ENCODE measurements at regions of chr14 and their contacts with region 1.

Region 1: DNA sequence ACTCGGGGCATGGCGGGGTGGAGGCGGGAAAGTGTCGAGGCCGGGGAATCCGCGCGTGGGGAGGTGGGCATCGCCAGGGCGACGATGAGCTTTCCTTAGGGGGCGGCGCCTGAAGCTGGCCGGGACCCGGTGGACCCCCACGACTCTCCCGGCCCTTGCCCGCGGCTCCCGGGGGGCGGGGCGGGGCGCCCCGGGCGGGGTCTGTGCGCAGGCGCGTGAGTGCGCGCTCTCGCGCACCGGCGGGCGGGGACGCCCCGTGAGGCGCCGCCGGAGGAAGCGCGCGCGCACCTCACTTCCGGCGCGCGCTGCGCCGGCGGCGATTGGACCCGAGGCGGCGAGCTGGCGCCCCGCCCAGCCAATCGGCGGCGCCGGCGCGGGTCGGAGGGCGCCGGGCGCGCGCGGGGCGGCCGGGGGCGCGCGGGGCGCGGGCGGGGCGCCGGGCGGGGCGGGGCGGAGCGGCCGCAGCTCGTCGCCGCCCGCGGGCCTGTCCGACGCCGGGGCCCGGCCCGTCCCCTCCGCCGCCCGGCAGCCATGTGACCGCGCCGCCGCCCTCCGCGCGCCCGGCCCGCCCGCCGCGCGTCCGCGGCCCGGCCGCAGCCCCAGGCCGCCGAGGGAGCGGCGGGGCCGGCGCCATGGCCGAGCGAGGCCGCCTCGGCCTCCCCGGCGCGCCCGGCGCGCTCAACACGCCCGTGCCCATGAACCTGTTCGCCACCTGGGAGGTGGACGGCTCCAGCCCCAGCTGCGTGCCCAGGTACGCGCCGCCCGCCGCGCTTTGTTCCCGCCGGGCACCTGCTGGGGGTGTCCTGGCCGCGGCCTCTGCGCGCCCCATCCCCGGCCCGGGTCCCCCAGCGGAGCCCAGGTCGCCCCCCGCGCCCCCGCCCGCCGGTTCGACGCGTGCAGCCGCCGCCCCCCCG is at the start of gene PACS2:
- DNase-seq: peak; percentile 88
- H3K4me3 ChIP-seq: peak within 1 kb of the TSS; percentile 63 to 95 (median 88)
- H3K27ac ChIP-seq: peak within 1 kb of the TSS; percentile 91 to 98 (median 94)
- H3K4me1 ChIP-seq: peaks cover 0 to 45% (median 40%) of the 10 kb centered on the region in 4 donors
- H3K27me3 ChIP-seq: no peaks in the 10 kb centered on the region
- CTCF ChIP-seq: no peak
- EP300 ChIP-seq: no peak
- POLR2A ChIP-seq: no peak
- total RNA-seq, gene PACS2: 38.7 to 90.6 (median 47.4) TPM

Region 2: DNA sequence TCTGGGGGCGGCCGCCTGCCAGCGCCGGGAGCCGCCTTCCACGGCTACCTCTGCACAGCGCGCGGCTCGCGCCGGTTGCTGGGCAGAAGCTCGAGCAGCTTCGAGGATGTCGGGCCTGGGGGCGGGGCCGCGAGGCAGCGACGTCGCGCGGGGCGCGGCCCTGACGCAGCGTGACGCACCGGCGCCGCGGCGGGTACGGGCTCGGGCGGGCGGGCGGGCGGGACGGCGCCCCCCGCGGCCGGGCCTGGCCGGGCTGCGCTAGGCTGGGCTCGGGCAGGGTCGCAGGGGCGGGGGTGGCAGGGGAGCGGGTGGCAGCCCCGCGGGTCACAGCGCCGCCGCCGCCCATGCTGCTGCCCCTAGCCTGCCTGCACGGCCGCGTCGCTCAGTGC is 66.2 kb before region 1 on chr14 and contains the start of gene BTBD6:
- intact Hi-C with region 1: loop called (anchors 10 kb)
- DNase-seq: peak; percentile 93
- H3K4me3 ChIP-seq: peak within 1 kb of the TSS; percentile 43 to 70 (median 63)
- H3K27ac ChIP-seq: peak within 1 kb of the TSS; percentile 84 to 96 (median 92)
- H3K4me1 ChIP-seq: peaks cover 0 to 27% (median 20%) of the 10 kb centered on the region in 4 donors
- H3K27me3 ChIP-seq: no peaks in the 10 kb centered on the region
- CTCF ChIP-seq: no peak
- EP300 ChIP-seq: no peak
- POLR2A ChIP-seq: peak in 1 of 2 donors; percentile 28
- total RNA-seq, gene BTBD6: 31.3 to 46.7 (median 37.1) TPM

Region 3: GRCh38 chr14:105258846-105259245 is 55.7 kb before region 1 on chr14:
- intact Hi-C with region 1: no loop called
- DNase-seq: no peak
- H3K4me3 ChIP-seq: no peak overlapping the region
- H3K27ac ChIP-seq: no peak overlapping the region
- H3K4me1 ChIP-seq: no peaks in the 10 kb centered on the region
- H3K27me3 ChIP-seq: no peaks in the 10 kb centered on the region
- CTCF ChIP-seq: no peak
- EP300 ChIP-seq: no peak
- POLR2A ChIP-seq: no peak

Region 4: DNA sequence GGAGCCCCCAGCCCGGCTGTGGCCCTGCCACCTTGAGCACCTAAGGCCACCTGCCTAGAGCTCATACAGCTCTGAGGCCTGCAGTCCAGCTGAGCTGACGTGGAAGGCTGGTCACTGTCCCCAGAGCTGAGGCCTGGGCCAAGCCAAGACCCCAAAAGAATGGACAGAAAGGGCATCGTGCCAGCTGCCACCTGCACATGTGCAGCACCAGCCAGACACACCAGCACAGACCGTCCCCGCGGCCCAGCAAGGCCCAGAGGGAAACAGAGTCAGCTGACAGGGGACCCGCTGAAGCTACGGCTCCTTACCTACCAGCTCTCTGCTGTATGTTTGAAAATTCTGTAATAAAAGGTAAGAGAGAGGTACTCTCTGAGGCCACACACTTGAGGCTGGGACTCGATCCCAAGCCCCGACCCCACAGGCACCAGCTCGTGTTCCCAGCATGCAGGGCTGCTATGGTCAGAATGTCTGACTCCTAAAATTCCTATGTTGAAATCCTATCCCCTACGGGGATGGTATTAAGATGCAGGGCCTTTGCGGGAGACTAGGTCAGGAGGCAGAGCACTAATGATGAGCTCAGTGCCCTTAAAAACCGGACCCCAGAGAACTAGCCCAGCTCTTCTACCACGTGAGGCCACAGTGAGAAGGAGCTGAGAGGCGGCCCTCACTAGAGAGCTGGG is 39.1 kb before region 1 on chr14:
- intact Hi-C with region 1: no loop called
- DNase-seq: no peak
- H3K4me3 ChIP-seq: no peak overlapping the region
- H3K27ac ChIP-seq: no peak overlapping the region
- H3K4me1 ChIP-seq: no peaks in the 10 kb centered on the region
- H3K27me3 ChIP-seq: no peaks in the 10 kb centered on the region
- CTCF ChIP-seq: no peak
- EP300 ChIP-seq: no peak
- POLR2A ChIP-seq: no peak

Region 5: DNA sequence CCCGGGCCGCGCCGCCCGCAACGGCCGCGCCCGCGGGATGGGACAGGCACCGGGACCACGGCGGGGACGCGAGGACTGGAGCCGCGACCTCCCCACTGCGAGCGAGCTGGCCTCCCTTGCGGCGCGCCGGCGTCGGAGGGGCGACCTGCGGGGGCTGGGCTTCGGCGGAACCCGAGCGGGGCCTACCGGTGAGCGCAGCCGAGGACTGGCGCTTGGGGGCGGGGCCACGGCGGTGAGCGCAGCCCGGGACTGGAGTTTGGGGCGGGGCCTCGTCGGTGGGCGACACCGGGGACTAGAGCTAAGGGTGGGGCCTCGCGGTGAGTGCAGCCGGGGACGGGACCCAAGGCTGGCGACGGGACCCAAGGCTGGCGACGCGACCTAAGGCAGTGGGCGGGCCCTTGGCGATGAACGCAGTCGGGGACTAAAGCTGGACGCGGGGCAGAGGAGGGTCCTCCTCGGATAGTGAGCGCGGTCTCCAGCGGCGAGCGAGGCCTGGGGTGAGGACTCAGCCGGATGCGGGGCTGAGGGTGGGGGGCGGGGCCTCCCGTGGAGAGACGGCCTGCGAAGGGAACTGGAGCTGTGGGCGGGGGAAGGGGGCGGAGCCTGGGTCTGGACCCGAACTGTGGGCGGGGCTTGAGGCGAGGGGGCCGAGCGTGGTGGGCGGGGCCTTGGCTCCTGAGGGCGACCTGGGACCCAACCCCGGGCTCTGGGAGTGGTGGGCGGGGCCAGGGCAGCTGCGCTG is 13.6 kb before region 1 on chr14 and contains the start of gene BRF1:
- intact Hi-C with region 1: loop called (anchors 1 kb)
- DNase-seq: peak; percentile 99
- H3K4me3 ChIP-seq: peak within 1 kb of the TSS; percentile 64 to 88 (median 70)
- H3K27ac ChIP-seq: peak within 1 kb of the TSS; percentile 95 to 98 (median 98)
- H3K4me1 ChIP-seq: peaks cover 0 to 27% (median 21%) of the 10 kb centered on the region in 4 donors
- H3K27me3 ChIP-seq: no peaks in the 10 kb centered on the region
- CTCF ChIP-seq: no peak
- EP300 ChIP-seq: no peak
- POLR2A ChIP-seq: peak; percentile 15 to 40
- total RNA-seq, gene BRF1: 19.3 to 39.2 (median 28.5) TPM

Region 6: DNA sequence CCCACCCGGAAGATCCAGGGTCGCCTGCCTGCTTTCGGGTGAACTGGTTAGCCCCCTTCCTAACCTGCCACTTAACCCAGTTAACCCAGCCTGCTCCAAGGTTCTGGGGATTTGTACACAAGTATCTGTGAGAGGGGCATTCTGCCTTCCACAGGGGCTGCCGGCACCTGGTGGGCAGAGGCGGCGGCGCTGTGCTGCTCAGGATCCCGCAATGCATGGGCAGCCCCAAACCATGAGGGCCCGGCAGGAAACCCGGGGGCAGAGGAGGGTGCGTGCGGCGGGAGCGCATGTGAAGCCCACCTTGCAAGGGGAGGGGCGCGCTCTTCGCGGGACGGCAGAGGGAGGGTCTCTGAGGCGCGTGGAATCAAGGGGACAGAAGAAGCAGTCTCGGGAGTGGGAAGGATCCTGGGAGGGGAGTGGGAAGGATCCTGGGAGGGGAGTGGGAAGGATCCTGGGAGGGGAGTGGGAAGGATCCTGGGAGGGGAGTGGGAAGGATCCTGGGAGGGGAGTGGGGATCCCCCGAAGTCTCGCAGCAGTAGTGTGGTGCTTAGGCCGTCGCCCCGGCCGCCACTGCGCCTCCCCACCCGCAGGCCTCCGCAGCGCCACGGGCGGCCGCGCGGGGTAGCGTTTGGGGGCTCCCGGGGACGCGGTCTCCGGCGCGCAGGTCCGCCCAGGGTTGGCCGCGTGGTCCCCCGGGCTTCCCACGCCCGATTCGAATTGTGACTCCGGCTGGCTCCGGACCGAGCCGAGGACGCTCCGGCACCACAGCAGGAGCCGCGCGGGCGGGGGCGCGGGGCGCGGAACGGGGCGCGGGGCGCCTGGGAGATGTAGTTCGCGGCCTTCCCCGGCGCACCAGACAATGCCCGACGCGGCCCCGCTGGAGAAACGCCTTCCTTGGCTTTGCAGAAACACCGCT is 100.2 kb after region 1 on chr14:
- intact Hi-C with region 1: loop called (anchors 5 kb)
- DNase-seq: peak; percentile 90
- H3K4me3 ChIP-seq: peak overlapping the region; percentile 20 to 59 (median 56)
- H3K27ac ChIP-seq: peak overlapping the region; percentile 77 to 82 (median 80)
- H3K4me1 ChIP-seq: peaks cover 0 to 47% (median 37%) of the 10 kb centered on the region in 4 donors
- H3K27me3 ChIP-seq: peaks cover 10 to 34% (median 24%) of the 10 kb centered on the region in 3 donors
- CTCF ChIP-seq: peak; percentile 11 to 86 (median 46)
- EP300 ChIP-seq: no peak
- POLR2A ChIP-seq: no peak

Region 7: GRCh38 chr14:105480952-105481801 is 166.6 kb after region 1 on chr14:
- intact Hi-C with region 1: loop called (anchors 5 kb)
- DNase-seq: peak; percentile 94
- H3K4me3 ChIP-seq: peak overlapping the region; percentile 24 to 51 (median 42)
- H3K27ac ChIP-seq: peak overlapping the region; percentile 85 to 98 (median 91)
- H3K4me1 ChIP-seq: peaks cover 0 to 72% (median 66%) of the 10 kb centered on the region in 4 donors
- H3K27me3 ChIP-seq: peaks cover 0 to 43% (median 12%) of the 10 kb centered on the region in 3 donors
- CTCF ChIP-seq: peak; percentile 96 to 99 (median 98)
- EP300 ChIP-seq: no peak
- POLR2A ChIP-seq: no peak

Region 8: DNA sequence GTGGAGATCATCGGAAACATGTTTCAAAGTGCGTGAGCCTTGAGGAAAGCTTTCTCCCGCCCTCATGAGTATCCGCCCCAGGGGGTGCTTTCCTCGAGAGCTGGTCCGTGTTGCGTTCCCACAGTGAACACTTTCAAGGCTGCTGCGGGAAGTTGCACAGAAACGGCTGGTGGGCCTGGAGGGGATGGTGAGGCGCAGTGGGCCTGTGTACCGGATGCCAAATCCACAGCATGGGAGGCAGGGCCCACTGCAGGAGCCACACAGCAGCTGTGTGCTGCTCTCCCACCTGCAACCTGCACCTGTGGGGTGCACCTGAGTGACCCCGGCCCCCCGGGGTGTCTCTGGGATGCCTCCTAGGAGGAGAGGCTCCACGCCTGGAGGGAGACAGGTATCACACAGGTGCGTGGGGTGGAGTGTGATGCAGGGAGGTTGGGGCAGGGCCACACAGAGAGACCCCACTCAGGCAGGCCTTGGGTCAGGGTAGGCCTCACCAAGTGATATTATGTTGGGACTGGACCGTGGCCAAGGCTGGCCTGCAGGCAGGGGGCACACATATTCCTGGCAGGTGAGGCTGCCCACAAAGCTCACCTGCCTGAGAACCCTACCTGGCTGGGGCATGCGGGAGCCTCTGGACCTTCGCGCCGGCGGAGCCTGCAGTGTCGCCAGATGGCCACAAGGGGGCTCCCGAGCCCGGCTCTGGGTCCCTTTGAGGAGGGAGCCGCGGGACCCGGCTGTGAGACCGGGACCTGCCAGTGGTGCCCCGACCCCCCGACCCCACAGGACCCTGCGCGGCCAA is 223.0 kb after region 1 on chr14:
- intact Hi-C with region 1: no loop called
- DNase-seq: peak; percentile 68
- H3K4me3 ChIP-seq: no peak overlapping the region
- H3K27ac ChIP-seq: no peak overlapping the region
- H3K4me1 ChIP-seq: peaks cover 0 to 7% (median 0%) of the 10 kb centered on the region in 4 donors
- H3K27me3 ChIP-seq: peaks cover 0 to 37% (median 12%) of the 10 kb centered on the region in 3 donors
- CTCF ChIP-seq: peak; percentile 47 to 98 (median 72)
- EP300 ChIP-seq: no peak
- POLR2A ChIP-seq: no peak